PC-9 (cell line): ENCODE measurements at regions of chr2 and their contacts with region 1.

Region 1: GRCh38 chr2:19140596-19141219 is 217.7 kb downstream of the OSR1 start:
- DNase-seq: peak; percentile 83 to 100
- H3K4me3 ChIP-seq: no peak overlapping the region; the same call in 1 of the 2 replicates
- H3K27ac ChIP-seq: peak overlapping the region; percentile 88
- H3K4me1 ChIP-seq: peaks cover 48% of the 10 kb centered on the region
- H3K27me3 ChIP-seq: no peaks in the 10 kb centered on the region
- CTCF ChIP-seq: no peak

Region 2: GRCh38 chr2:18829251-18829902 is 311.3 kb before region 1 on chr2:
- CTCF ChIA-PET with region 1: no interaction called
- POLR2A ChIA-PET with region 1: no interaction called
- intact Hi-C with region 1: loop called (anchors 5 kb)
- DNase-seq: peak; percentile 55 to 99
- H3K4me3 ChIP-seq: peak overlapping the region; percentile 15; the same call in 1 of the 2 replicates
- H3K27ac ChIP-seq: peak overlapping the region; percentile 82
- H3K4me1 ChIP-seq: peaks cover 86% of the 10 kb centered on the region
- H3K27me3 ChIP-seq: no peaks in the 10 kb centered on the region
- CTCF ChIP-seq: no peak

Region 3: GRCh38 chr2:19114754-19115231 is 25.9 kb before region 1 on chr2:
- CTCF ChIA-PET with region 1: no interaction called
- POLR2A ChIA-PET with region 1: no interaction called
- intact Hi-C with region 1: no loop called
- DNase-seq: no peak
- H3K4me3 ChIP-seq: no peak overlapping the region
- H3K27ac ChIP-seq: no peak overlapping the region
- H3K4me1 ChIP-seq: no peaks in the 10 kb centered on the region
- H3K27me3 ChIP-seq: no peaks in the 10 kb centered on the region
- CTCF ChIP-seq: no peak

Region 4: GRCh38 chr2:19176955-19177354 is 36.2 kb after region 1 on chr2:
- CTCF ChIA-PET with region 1: interaction called, 3 read pairs
- POLR2A ChIA-PET with region 1: no interaction called
- intact Hi-C with region 1: loop called (anchors 1 kb)
- DNase-seq: peak; percentile 10 to 63
- H3K4me3 ChIP-seq: no peak overlapping the region
- H3K27ac ChIP-seq: no peak overlapping the region
- H3K4me1 ChIP-seq: peaks cover 10% of the 10 kb centered on the region
- H3K27me3 ChIP-seq: no peaks in the 10 kb centered on the region
- CTCF ChIP-seq: no peak

Region 5: GRCh38 chr2:19256121-19256601 is 115.5 kb after region 1 on chr2:
- CTCF ChIA-PET with region 1: no interaction called
- POLR2A ChIA-PET with region 1: no interaction called
- intact Hi-C with region 1: loop called (anchors 5 kb)
- DNase-seq: peak; percentile 16 to 96
- H3K4me3 ChIP-seq: peak overlapping the region; percentile 1; the same call in 1 of the 2 replicates
- H3K27ac ChIP-seq: peak overlapping the region; percentile 78
- H3K4me1 ChIP-seq: peaks cover 27% of the 10 kb centered on the region
- H3K27me3 ChIP-seq: no peaks in the 10 kb centered on the region
- CTCF ChIP-seq: no peak

Region 6: GRCh38 chr2:19347619-19348562 is 207.2 kb after region 1 on chr2:
- CTCF ChIA-PET with region 1: no interaction called
- POLR2A ChIA-PET with region 1: no interaction called
- intact Hi-C with region 1: loop called (anchors 2 kb)
- DNase-seq: peak; percentile 86 to 97
- H3K4me3 ChIP-seq: peak overlapping the region; percentile 70
- H3K27ac ChIP-seq: peak overlapping the region; percentile 78
- H3K4me1 ChIP-seq: peaks cover 12% of the 10 kb centered on the region
- H3K27me3 ChIP-seq: no peaks in the 10 kb centered on the region
- CTCF ChIP-seq: no peak